Endothelial cell of umbilical vein (primary cell): ENCODE measurements at regions of chr2 and their contacts with region 1.

Region 1: DNA sequence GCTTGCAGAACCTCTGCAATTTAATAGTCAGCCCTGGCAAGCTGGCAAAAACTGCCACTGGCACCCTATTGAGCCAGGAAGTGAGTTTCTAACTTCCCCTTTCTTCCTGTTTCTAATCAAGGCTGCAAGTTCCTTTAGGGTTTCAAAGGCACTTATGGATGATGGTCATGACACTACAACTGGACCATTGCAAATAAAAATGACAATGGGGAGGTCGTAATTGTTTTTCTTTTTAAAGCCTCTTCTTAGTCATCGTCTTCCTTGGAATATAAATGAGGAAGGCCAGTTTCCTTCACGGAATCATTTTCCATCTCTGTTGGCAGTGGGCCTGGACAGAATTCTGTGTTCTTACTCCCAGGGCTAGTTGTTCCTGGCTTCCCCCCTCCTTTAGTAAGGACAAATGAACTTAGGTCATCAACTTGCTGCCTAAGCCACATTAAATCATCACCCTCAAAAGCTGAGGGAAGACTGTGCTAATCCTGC is 35.8 kb downstream of the SH3RF3 start:
- DNase-seq: peak; percentile 95
- H3K4me3 ChIP-seq: no peak overlapping the region
- H3K27ac ChIP-seq: peak overlapping the region; percentile 37
- H3K4me1 ChIP-seq: peaks cover 50% of the 10 kb centered on the region
- H3K27me3 ChIP-seq: no peaks in the 10 kb centered on the region
- CTCF ChIP-seq: no peak
- POLR2A ChIP-seq: no peak

Region 2: GRCh38 chr2:109089602-109090300 is 75.0 kb before region 1 on chr2:
- CTCF ChIA-PET with region 1: no interaction called
- POLR2A ChIA-PET with region 1: no interaction called
- dilution Hi-C with region 1: no loop called
- intact Hi-C with region 1: no loop called
- DNase-seq: peak; percentile 55
- H3K4me3 ChIP-seq: no peak overlapping the region
- H3K27ac ChIP-seq: peak overlapping the region; percentile 39
- H3K4me1 ChIP-seq: peaks cover 18% of the 10 kb centered on the region
- H3K27me3 ChIP-seq: no peaks in the 10 kb centered on the region
- CTCF ChIP-seq: no peak
- POLR2A ChIP-seq: no peak

Region 3: GRCh38 chr2:109120166-109120565 is 44.6 kb before region 1 on chr2:
- CTCF ChIA-PET with region 1: no interaction called
- POLR2A ChIA-PET with region 1: no interaction called
- dilution Hi-C with region 1: no loop called
- intact Hi-C with region 1: no loop called
- DNase-seq: no peak
- H3K4me3 ChIP-seq: no peak overlapping the region
- H3K27ac ChIP-seq: no peak overlapping the region
- H3K4me1 ChIP-seq: no peaks in the 10 kb centered on the region
- H3K27me3 ChIP-seq: peaks cover 9 to 14% of the 10 kb centered on the region in 2 experiments
- CTCF ChIP-seq: no peak
- POLR2A ChIP-seq: no peak

Region 4: DNA sequence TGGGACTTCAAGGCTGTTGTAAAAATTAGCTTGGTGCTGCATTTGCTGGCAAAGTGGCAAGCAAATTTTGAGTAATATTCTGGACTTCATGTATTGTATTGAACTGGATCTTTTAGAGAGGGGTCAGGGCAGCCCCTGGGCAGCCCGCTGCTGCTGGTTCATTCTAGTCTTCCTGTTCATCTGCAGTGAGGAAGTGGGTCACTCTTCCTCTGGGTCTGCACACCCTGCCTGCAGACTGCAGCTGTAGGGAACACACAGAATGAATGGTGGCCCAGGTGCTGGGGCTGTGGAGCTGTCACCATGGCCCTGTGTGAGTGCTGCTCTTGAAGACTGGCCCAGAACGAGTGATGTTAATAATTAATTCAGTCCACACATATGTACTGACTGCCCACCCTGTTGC is 26.3 kb before region 1 on chr2:
- CTCF ChIA-PET with region 1: interaction called, 4 read pairs
- POLR2A ChIA-PET with region 1: no interaction called
- dilution Hi-C with region 1: no loop called
- intact Hi-C with region 1: loop called (anchors 2 kb)
- DNase-seq: peak; percentile 59
- H3K4me3 ChIP-seq: no peak overlapping the region
- H3K27ac ChIP-seq: no peak overlapping the region
- H3K4me1 ChIP-seq: peaks cover 33% of the 10 kb centered on the region
- H3K27me3 ChIP-seq: no peaks in the 10 kb centered on the region
- CTCF ChIP-seq: no peak
- POLR2A ChIP-seq: no peak

Region 5: GRCh38 chr2:109213646-109214417 is 49.1 kb after region 1 on chr2:
- CTCF ChIA-PET with region 1: no interaction called
- POLR2A ChIA-PET with region 1: no interaction called
- dilution Hi-C with region 1: no loop called
- intact Hi-C with region 1: no loop called
- DNase-seq: peak; percentile 60
- H3K4me3 ChIP-seq: no peak overlapping the region
- H3K27ac ChIP-seq: peak overlapping the region; percentile 17
- H3K4me1 ChIP-seq: peaks cover 30% of the 10 kb centered on the region
- H3K27me3 ChIP-seq: no peaks in the 10 kb centered on the region
- CTCF ChIP-seq: no peak
- POLR2A ChIP-seq: peak; percentile 11

Region 6: DNA sequence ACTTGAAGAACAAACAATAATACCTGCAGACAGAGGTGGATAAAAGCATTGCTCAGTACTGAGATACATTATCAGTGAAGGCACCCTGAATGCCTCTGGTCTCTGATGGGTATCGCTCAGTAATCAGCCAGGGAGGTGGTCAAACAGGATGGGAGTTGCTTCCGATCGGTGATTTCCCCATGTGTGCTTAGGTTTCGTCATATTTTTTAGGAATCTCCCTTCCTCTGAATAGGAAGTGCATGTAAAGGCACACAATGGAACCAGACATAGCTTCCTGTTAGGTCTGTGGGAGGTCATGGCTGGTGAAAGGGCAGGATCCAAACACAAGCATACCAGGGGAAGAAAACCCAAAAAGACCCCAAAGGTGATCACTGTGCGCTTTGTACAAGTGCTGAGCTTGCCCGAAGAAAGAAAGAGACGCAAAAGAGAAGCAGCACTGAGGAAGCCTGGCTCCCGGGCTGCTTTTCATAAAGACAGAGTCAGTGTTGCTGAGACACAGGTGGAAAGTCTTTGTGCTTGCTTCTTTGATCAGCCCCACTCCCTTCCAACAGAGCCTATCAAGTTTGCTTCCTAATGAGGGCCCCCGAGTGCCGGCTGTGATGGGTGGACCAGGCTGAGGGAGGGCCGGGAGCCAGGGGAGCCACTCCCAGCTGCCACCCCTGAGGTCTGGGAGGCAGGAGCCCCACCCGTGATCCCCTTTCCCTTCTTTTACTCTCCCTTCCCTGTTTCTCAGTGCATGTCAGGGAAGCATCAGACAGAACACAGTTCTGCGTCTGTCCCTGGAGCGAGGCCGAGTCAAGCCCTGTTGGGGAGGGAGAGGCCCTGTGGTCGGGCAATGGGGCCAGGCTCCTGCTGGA is 102.4 kb after region 1 on chr2:
- CTCF ChIA-PET with region 1: no interaction called
- POLR2A ChIA-PET with region 1: no interaction called
- dilution Hi-C with region 1: no loop called
- intact Hi-C with region 1: loop called (anchors 2 kb)
- DNase-seq: peak; percentile 87
- H3K4me3 ChIP-seq: no peak overlapping the region
- H3K27ac ChIP-seq: peak overlapping the region; percentile 95
- H3K4me1 ChIP-seq: peaks cover 39% of the 10 kb centered on the region
- H3K27me3 ChIP-seq: no peaks in the 10 kb centered on the region
- CTCF ChIP-seq: no peak
- POLR2A ChIP-seq: peak; percentile 45